ENCODE measurements at regions of chr13 and their contacts with region 1.

Region 1: GRCh38 chr13:27826379-27827353 is 34.4 kb downstream of the GSX1 start:
- DNase-seq: peak; percentile 48 to 81 (median 59)
- ATAC-seq: peak; percentile 69
- H3K4me3 ChIP-seq: no peak overlapping the region
- H3K4me3 Mint-ChIP-seq: no peak overlapping the region
- H3K27ac ChIP-seq: no peak overlapping the region
- H3K27ac Mint-ChIP-seq: no peak overlapping the region
- H3K4me1 ChIP-seq: peaks cover 13% of the 10 kb centered on the region
- H3K4me1 Mint-ChIP-seq: peaks cover 6% of the 10 kb centered on the region
- H3K27me3 ChIP-seq: peaks cover 52 to 68% of the 10 kb centered on the region in 2 experiments
- H3K27me3 Mint-ChIP-seq: peaks cover 91% of the 10 kb centered on the region
- CTCF ChIP-seq: peak; percentile 93

Region 2: GRCh38 chr13:26895081-26895807 is 931.4 kb before region 1 on chr13:
- CTCF ChIA-PET with region 1: no interaction called
- POLR2A ChIA-PET with region 1: no interaction called
- intact Hi-C with region 1: no loop called
- DNase-seq: no peak
- ATAC-seq: no peak
- H3K4me3 ChIP-seq: no peak overlapping the region
- H3K4me3 Mint-ChIP-seq: no peak overlapping the region
- H3K27ac ChIP-seq: no peak overlapping the region
- H3K27ac Mint-ChIP-seq: no peak overlapping the region
- H3K4me1 ChIP-seq: no peaks in the 10 kb centered on the region
- H3K4me1 Mint-ChIP-seq: no peaks in the 10 kb centered on the region
- H3K27me3 ChIP-seq: no peaks in the 10 kb centered on the region
- H3K27me3 Mint-ChIP-seq: peaks cover 33% of the 10 kb centered on the region
- CTCF ChIP-seq: no peak

Region 3: GRCh38 chr13:26985285-26985878 is 841.3 kb before region 1 on chr13:
- CTCF ChIA-PET with region 1: interaction called, 17 read pairs
- POLR2A ChIA-PET with region 1: interaction called, 3 read pairs
- intact Hi-C with region 1: loop called (anchors 1 to 2 kb)
- DNase-seq: peak; percentile 44 to 87 (median 60)
- ATAC-seq: peak; percentile 91
- H3K4me3 ChIP-seq: no peak overlapping the region
- H3K4me3 Mint-ChIP-seq: no peak overlapping the region
- H3K27ac ChIP-seq: no peak overlapping the region
- H3K27ac Mint-ChIP-seq: no peak overlapping the region
- H3K4me1 ChIP-seq: no peaks in the 10 kb centered on the region
- H3K4me1 Mint-ChIP-seq: no peaks in the 10 kb centered on the region
- H3K27me3 ChIP-seq: peaks cover 0 to 5% of the 10 kb centered on the region in 2 experiments
- H3K27me3 Mint-ChIP-seq: peaks cover 30% of the 10 kb centered on the region
- CTCF ChIP-seq: peak; percentile 92

Region 4: DNA sequence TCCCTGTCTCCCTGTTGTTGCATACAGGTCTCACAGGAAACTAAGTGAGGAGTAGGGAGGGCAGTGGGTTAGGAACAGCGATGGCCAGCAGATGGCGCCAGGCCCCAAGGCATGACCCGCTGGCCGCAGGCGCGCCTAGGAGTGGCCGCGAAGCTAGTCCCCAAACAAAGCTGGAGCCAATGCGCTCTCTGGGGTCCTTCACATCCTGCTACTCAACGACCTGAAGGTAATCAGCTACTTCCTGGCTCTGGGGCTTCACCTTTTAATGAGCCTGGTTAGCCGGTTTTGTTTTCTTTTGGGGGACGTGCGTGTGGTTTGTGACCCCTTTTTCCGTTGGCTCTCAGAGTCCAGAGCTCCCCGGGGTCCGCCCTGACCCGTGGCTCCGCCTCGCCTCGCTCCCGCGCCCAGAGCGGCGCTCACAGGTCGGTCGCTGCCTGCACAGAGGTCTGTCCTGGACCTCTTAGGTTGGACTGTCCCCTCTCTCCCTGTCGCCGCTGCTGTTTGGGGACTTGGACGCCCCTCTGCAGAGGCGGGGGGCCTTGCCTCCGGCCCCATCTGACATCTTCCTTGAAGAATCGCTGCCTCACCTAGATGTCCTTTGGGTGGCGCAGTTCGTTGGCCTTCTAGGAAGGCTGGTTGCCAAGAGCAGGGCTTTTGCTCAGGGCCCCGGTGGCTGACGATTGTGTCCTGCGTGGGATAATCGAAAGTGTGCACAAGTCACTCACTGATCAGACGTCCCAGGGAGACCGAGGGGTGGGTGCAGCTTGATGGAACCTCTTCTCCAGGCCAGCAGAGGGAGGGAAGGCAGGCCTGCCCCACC is 464.4 kb before region 1 on chr13:
- CTCF ChIA-PET with region 1: interaction called, 22 read pairs
- POLR2A ChIA-PET with region 1: interaction called, 5 read pairs
- intact Hi-C with region 1: loop called (anchors 1 kb)
- DNase-seq: peak; percentile 58 to 86 (median 70)
- ATAC-seq: peak; percentile 90
- H3K4me3 ChIP-seq: peak overlapping the region; percentile 33
- H3K4me3 Mint-ChIP-seq: peak overlapping the region; percentile 58
- H3K27ac ChIP-seq: no peak overlapping the region
- H3K27ac Mint-ChIP-seq: no peak overlapping the region
- H3K4me1 ChIP-seq: peaks cover 10% of the 10 kb centered on the region
- H3K4me1 Mint-ChIP-seq: peaks cover 4% of the 10 kb centered on the region
- H3K27me3 ChIP-seq: peaks cover 6 to 20% of the 10 kb centered on the region in 2 experiments
- H3K27me3 Mint-ChIP-seq: peaks cover 38% of the 10 kb centered on the region
- CTCF ChIP-seq: peak; percentile 86

Region 5: GRCh38 chr13:27374650-27375049 is 452.0 kb before region 1 on chr13:
- CTCF ChIA-PET with region 1: interaction called, 32 read pairs
- POLR2A ChIA-PET with region 1: no interaction called
- intact Hi-C with region 1: loop called (anchors 1 kb)
- DNase-seq: peak; percentile 19 to 80 (median 38)
- ATAC-seq: peak; percentile 82
- H3K4me3 ChIP-seq: no peak overlapping the region
- H3K4me3 Mint-ChIP-seq: no peak overlapping the region
- H3K27ac ChIP-seq: no peak overlapping the region
- H3K27ac Mint-ChIP-seq: no peak overlapping the region
- H3K4me1 ChIP-seq: peaks cover 3% of the 10 kb centered on the region
- H3K4me1 Mint-ChIP-seq: peaks cover 5% of the 10 kb centered on the region
- H3K27me3 ChIP-seq: peaks cover 5 to 7% of the 10 kb centered on the region in 2 experiments
- H3K27me3 Mint-ChIP-seq: peaks cover 34% of the 10 kb centered on the region
- CTCF ChIP-seq: peak; percentile 75

Region 6: DNA sequence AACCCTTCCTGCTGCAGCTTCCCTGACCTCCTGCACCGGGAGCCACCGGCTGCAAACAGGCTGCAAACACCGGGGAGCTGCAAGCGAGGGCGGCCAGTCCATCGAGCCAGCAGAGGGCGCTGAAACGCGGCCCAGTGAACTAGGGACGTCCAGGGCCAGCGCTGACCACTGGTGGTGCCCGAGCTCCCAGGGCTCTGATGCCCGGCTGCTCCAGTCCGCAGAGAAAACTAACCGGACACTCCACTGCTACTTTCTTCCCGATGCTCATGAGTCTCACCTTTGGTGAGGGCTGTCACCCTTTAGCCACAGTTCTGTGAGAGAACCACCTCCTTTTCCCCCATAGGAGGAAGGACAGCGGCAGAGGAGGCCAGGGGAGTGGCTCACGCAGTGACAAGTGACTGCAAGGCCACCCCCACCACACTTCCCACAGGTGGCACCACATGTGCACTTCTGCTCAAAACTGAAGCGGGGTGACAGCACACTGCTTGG is 293.5 kb before region 1 on chr13:
- CTCF ChIA-PET with region 1: interaction called, 8 read pairs
- POLR2A ChIA-PET with region 1: interaction called, 3 read pairs
- intact Hi-C with region 1: loop called (anchors 1 to 2 kb)
- DNase-seq: peak in 13 of 14 experiments; percentile 18 to 68 (median 32)
- ATAC-seq: peak; percentile 39
- H3K4me3 ChIP-seq: peak overlapping the region; percentile 24
- H3K4me3 Mint-ChIP-seq: no peak overlapping the region
- H3K27ac ChIP-seq: no peak overlapping the region
- H3K27ac Mint-ChIP-seq: no peak overlapping the region
- H3K4me1 ChIP-seq: peaks cover 8% of the 10 kb centered on the region
- H3K4me1 Mint-ChIP-seq: peaks cover 10% of the 10 kb centered on the region
- H3K27me3 ChIP-seq: no peaks in the 10 kb centered on the region
- H3K27me3 Mint-ChIP-seq: peaks cover 6% of the 10 kb centered on the region
- CTCF ChIP-seq: peak; percentile 68

Region 7: DNA sequence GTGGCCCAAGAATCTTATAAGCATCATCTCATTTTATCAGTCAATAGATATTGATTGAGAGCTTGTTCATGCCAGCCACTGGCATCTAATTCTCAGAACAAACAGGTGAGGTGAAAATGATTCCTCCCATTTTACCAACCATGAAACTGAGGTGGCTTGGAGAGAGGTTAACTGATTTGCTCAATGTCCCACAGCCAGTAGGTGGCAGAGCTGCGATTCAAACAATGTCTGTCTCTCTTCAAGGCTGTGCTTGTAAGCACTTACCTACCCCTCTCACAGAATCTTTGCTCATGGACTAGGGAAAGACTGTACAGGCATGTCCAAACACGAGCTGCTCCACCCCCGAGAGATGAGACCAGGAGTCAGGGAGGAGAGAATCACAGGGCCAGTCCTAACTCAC is 55.9 kb before region 1 on chr13:
- CTCF ChIA-PET with region 1: no interaction called
- POLR2A ChIA-PET with region 1: interaction called, 4 read pairs
- intact Hi-C with region 1: loop called (anchors 1 to 2 kb)
- DNase-seq: peak in 5 of 14 experiments; percentile 12 to 45 (median 24)
- ATAC-seq: no peak
- H3K4me3 ChIP-seq: no peak overlapping the region
- H3K4me3 Mint-ChIP-seq: no peak overlapping the region
- H3K27ac ChIP-seq: no peak overlapping the region
- H3K27ac Mint-ChIP-seq: no peak overlapping the region
- H3K4me1 ChIP-seq: no peaks in the 10 kb centered on the region
- H3K4me1 Mint-ChIP-seq: no peaks in the 10 kb centered on the region
- H3K27me3 ChIP-seq: peaks cover 6 to 23% of the 10 kb centered on the region in 2 experiments
- H3K27me3 Mint-ChIP-seq: peaks cover 45% of the 10 kb centered on the region
- CTCF ChIP-seq: peak; percentile 56

Region 8: GRCh38 chr13:27813826-27814225 is 12.8 kb before region 1 on chr13:
- CTCF ChIA-PET with region 1: no interaction called
- POLR2A ChIA-PET with region 1: no interaction called
- intact Hi-C with region 1: no loop called
- DNase-seq: no peak
- ATAC-seq: no peak
- H3K4me3 ChIP-seq: no peak overlapping the region
- H3K4me3 Mint-ChIP-seq: no peak overlapping the region
- H3K27ac ChIP-seq: no peak overlapping the region
- H3K27ac Mint-ChIP-seq: no peak overlapping the region
- H3K4me1 ChIP-seq: no peaks in the 10 kb centered on the region
- H3K4me1 Mint-ChIP-seq: no peaks in the 10 kb centered on the region
- H3K27me3 ChIP-seq: peaks cover 15 to 19% of the 10 kb centered on the region in 2 experiments
- H3K27me3 Mint-ChIP-seq: peaks cover 76% of the 10 kb centered on the region
- CTCF ChIP-seq: no peak

Region 9: GRCh38 chr13:27980280-27980998 is 153.8 kb after region 1 on chr13:
- CTCF ChIA-PET with region 1: interaction called, 19 read pairs
- POLR2A ChIA-PET with region 1: interaction called, 4 read pairs
- intact Hi-C with region 1: loop called (anchors 1 kb)
- DNase-seq: no peak
- ATAC-seq: no peak
- H3K4me3 ChIP-seq: no peak overlapping the region
- H3K4me3 Mint-ChIP-seq: no peak overlapping the region
- H3K27ac ChIP-seq: no peak overlapping the region
- H3K27ac Mint-ChIP-seq: no peak overlapping the region
- H3K4me1 ChIP-seq: peaks cover 8% of the 10 kb centered on the region
- H3K4me1 Mint-ChIP-seq: peaks cover 13% of the 10 kb centered on the region
- H3K27me3 ChIP-seq: peaks cover 50 to 67% of the 10 kb centered on the region in 2 experiments
- H3K27me3 Mint-ChIP-seq: peaks cover 80% of the 10 kb centered on the region
- CTCF ChIP-seq: no peak

Measured in CD4-positive, alpha-beta T cell (primary cell).